Ovary (tissue), 10 donors: ENCODE measurements at regions of chr7 and their contacts with region 1.

Region 1: GRCh38 chr7:115789884-115790283 is 240.7 kb downstream of the TFEC start:
- DNase-seq: peak in 2 of 5 donors; percentile 7 to 10
- H3K4me3 ChIP-seq: no peak overlapping the region
- H3K27ac ChIP-seq: no peak overlapping the region
- H3K4me1 ChIP-seq: no peaks in the 10 kb centered on the region
- H3K27me3 ChIP-seq: no peaks in the 10 kb centered on the region
- CTCF ChIP-seq: no peak
- EP300 ChIP-seq: no peak
- POLR2A ChIP-seq: no peak

Region 2: GRCh38 chr7:114663502-114663901 is 1126.4 kb before region 1 on chr7:
- intact Hi-C with region 1: loop called in 1 of 4 experiments (anchors 5 kb)
- DNase-seq: no peak
- H3K4me3 ChIP-seq: no peak overlapping the region
- H3K27ac ChIP-seq: no peak overlapping the region
- H3K4me1 ChIP-seq: no peaks in the 10 kb centered on the region
- H3K27me3 ChIP-seq: no peaks in the 10 kb centered on the region
- CTCF ChIP-seq: no peak
- EP300 ChIP-seq: no peak
- POLR2A ChIP-seq: no peak

Region 3: GRCh38 chr7:115306586-115306985 is 483.3 kb before region 1 on chr7:
- intact Hi-C with region 1: loop called in 1 of 4 experiments (anchors 5 kb)
- DNase-seq: no peak
- H3K4me3 ChIP-seq: no peak overlapping the region
- H3K27ac ChIP-seq: no peak overlapping the region
- H3K4me1 ChIP-seq: no peaks in the 10 kb centered on the region
- H3K27me3 ChIP-seq: no peaks in the 10 kb centered on the region
- CTCF ChIP-seq: no peak
- EP300 ChIP-seq: no peak
- POLR2A ChIP-seq: no peak

Region 4: GRCh38 chr7:115494529-115495147 is 295.2 kb before region 1 on chr7:
- intact Hi-C with region 1: no loop called
- DNase-seq: no peak
- H3K4me3 ChIP-seq: no peak overlapping the region
- H3K27ac ChIP-seq: no peak overlapping the region
- H3K4me1 ChIP-seq: no peaks in the 10 kb centered on the region
- H3K27me3 ChIP-seq: no peaks in the 10 kb centered on the region
- CTCF ChIP-seq: no peak
- EP300 ChIP-seq: no peak
- POLR2A ChIP-seq: no peak

Region 5: DNA sequence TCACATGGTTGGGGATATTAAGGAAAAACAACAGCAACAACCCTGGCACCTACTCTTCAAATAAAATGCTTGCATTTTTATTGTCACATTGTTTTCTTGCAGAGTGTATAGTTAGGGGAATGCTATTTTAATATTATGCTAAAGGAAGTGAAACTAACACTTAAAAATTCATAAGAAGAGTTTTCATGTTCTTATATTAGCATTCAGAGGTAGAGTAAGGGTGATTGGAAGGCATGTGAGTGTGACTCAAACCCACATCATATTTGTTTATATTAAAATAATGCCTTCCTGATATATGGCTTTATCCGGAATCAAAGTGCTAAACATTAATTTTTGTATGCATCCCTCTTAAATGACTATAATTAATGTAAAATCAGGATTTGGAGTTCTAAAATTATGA is 360.7 kb after region 1 on chr7:
- intact Hi-C with region 1: no loop called
- DNase-seq: no peak
- H3K4me3 ChIP-seq: no peak overlapping the region
- H3K27ac ChIP-seq: no peak overlapping the region
- H3K4me1 ChIP-seq: no peaks in the 10 kb centered on the region
- H3K27me3 ChIP-seq: no peaks in the 10 kb centered on the region
- CTCF ChIP-seq: no peak
- EP300 ChIP-seq: no peak
- POLR2A ChIP-seq: no peak